Prostate gland (tissue), 2 donors: ENCODE measurements at regions of chr3 and their contacts with region 1.

Region 1: DNA sequence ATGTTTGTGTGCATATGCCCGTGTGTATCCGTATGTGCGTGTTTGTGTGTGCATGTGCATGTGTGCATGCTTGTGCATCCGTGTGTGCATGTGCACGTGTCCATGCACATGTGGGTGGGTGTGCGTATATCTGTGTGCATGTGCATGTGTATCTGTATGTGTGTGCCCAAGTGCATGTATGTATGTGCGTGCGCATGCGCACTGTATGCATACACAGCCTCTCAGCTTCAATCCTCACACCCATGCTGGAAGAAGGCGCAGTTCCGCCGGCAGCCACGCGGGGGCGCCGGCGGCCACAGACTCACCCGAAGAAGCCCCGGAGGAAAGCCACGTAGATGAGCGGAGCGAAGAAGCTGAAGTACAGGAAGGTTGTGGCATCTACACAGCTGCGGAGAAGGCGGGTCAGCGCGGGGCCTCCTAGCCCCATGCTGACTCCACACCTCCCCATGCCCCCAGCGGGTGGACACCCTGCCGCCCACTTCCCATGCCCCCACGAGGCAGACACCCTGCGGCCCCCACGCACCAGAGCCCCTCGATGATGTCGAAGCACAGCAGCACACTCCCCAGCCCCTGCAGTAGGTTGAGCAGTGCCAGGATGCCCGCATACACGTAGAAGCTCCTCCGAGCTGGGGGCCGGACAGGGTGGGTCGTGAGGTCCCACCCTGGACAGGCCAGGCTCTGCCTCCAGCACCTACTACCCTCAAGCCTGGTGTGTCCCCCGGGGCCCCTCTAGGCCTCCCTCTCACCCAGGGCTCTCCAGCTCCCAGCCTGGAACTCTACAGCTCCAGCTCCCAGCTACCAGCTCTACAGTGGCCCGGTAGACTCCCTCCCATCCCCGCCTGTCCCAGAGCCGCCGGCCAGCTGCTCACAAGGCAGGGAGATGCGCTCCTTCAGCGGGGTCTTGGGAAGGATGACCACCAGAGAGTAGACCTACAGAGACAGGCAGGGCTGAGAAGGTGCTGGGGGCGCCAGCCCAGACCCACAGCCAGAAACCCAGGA is 15.4 kb downstream of the TPRA1 start:
- DNase-seq: peak; percentile 87
- H3K4me3 ChIP-seq: no peak overlapping the region
- H3K27ac ChIP-seq: no peak overlapping the region
- H3K4me1 ChIP-seq: no peaks in the 10 kb centered on the region
- H3K27me3 ChIP-seq: no peaks in the 10 kb centered on the region
- CTCF ChIP-seq: peak; percentile 91 to 99 (median 98)
- POLR2A ChIP-seq: no peak

Region 2: DNA sequence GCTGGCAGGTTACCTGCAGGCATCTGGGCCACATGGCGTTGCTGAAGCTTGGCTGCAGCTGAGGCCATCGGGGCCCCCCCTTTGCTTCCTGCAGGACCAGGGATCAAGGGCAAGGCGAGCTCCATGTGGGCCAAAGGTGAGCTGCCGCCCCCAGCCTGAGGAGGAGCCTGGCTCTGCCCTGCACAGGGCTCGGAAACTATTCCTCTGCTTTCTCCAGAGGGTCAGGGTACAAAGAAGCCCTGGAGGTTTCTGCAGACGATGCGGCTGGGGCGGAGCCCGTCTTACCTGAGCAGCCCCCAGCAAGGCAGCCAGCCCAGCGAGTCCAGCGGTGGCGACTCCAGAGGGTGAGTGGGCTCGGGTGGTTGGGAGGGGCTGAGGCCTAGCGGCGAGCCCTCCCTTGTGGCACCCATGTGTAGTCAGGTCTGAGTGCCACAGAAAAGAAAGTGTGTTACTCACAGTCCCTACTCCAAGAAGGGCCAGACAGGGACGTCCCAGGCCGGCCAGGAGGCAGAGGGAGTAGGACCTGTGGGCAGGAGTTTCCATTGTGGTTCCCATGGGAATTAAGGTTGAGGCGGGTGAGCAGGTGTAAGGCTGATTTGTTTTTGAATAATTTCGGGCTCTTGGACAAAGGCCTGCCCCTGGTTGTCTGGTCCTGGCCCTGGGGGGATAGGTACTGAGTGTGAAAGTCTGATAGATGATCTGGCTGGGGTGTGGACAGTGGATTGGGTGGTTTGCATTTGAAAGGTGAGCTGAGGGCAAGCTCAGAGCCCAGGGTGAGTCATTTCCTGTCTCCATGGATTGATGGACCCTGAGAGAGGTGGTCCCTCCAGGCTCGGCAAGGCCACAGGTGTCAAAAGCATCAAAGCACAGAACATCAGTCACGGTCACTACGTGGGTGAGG is 1155.0 kb before region 1 on chr3:
- intact Hi-C with region 1: no loop called
- DNase-seq: no peak
- H3K4me3 ChIP-seq: no peak overlapping the region
- H3K27ac ChIP-seq: no peak overlapping the region
- H3K4me1 ChIP-seq: no peaks in the 10 kb centered on the region
- H3K27me3 ChIP-seq: peaks cover 14% of the 10 kb centered on the region
- CTCF ChIP-seq: no peak
- POLR2A ChIP-seq: no peak

Region 3: GRCh38 chr3:127970966-127971592 is 395.9 kb after region 1 on chr3:
- intact Hi-C with region 1: loop called (anchors 5 kb)
- DNase-seq: peak; percentile 39
- H3K4me3 ChIP-seq: no peak overlapping the region
- H3K27ac ChIP-seq: no peak overlapping the region
- H3K4me1 ChIP-seq: no peaks in the 10 kb centered on the region
- H3K27me3 ChIP-seq: no peaks in the 10 kb centered on the region
- CTCF ChIP-seq: peak; percentile 27 to 75 (median 58)
- POLR2A ChIP-seq: no peak

Region 4: GRCh38 chr3:128084391-128084963 is 509.3 kb after region 1 on chr3:
- intact Hi-C with region 1: no loop called
- DNase-seq: peak; percentile 48
- H3K4me3 ChIP-seq: no peak overlapping the region
- H3K27ac ChIP-seq: peak overlapping the region; percentile 1 to 4
- H3K4me1 ChIP-seq: peaks cover 14% of the 10 kb centered on the region
- H3K27me3 ChIP-seq: no peaks in the 10 kb centered on the region
- CTCF ChIP-seq: no peak
- POLR2A ChIP-seq: no peak